ENCODE measurements at regions of chr1 and their contacts with region 1.

Region 1: DNA sequence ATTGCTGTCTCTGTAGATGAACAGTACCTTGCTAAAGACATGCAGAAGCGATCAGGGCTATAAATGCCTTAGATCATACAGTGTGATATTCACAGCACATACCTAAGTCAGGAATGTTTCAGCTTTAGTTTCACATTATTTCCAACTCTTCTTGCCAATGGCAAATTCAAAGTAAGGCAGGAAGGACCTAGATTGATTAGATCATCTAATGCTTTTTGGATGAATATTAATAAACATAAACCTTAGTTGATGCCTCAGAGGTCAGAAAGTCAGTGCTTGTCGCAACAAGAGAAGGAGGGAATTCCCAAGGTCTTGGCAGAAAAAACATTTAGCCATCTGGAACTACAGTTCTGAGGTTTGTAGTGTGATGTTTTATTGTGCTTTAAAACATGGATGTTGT is 122.3 kb downstream of the TNFSF18 start:
- DNase-seq: peak; percentile 65
- H3K4me3 ChIP-seq: no peak overlapping the region
- H3K27ac ChIP-seq: peak overlapping the region; percentile 7
- H3K4me1 ChIP-seq: peaks cover 34% of the 10 kb centered on the region
- H3K27me3 ChIP-seq: no peaks in the 10 kb centered on the region
- CTCF ChIP-seq: no peak
- POLR2A ChIP-seq: no peak

Region 2: DNA sequence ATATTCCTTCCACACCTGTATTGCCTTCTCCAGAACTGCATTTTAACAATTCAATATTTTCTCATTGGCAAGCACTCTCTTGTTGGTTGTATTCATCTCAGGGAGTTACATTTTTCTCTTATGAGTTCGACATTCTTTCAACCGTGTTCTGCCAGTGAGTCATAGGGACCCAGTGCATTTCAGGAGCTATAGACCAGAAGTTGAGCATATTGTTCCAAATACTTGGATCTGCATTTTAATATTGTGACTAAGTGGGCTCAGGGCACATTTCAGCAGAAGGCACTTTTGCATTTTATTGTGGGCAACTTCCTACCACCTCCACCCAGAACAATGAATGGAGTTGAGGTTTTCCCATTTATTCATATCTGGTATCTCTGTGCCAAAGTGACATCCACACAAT is 10.4 kb before region 1 on chr1:
- CTCF ChIA-PET with region 1: interaction called, 18 read pairs
- POLR2A ChIA-PET with region 1: interaction called, 4 read pairs
- dilution Hi-C with region 1: no loop called
- intact Hi-C with region 1: loop called (anchors 1 kb)
- DNase-seq: peak; percentile 96
- H3K4me3 ChIP-seq: no peak overlapping the region
- H3K27ac ChIP-seq: peak overlapping the region; percentile 84
- H3K4me1 ChIP-seq: peaks cover 62% of the 10 kb centered on the region
- H3K27me3 ChIP-seq: no peaks in the 10 kb centered on the region
- CTCF ChIP-seq: no peak
- POLR2A ChIP-seq: peak; percentile 68